ENCODE measurements at regions of chr3 and their contacts with region 1.

Region 1: DNA sequence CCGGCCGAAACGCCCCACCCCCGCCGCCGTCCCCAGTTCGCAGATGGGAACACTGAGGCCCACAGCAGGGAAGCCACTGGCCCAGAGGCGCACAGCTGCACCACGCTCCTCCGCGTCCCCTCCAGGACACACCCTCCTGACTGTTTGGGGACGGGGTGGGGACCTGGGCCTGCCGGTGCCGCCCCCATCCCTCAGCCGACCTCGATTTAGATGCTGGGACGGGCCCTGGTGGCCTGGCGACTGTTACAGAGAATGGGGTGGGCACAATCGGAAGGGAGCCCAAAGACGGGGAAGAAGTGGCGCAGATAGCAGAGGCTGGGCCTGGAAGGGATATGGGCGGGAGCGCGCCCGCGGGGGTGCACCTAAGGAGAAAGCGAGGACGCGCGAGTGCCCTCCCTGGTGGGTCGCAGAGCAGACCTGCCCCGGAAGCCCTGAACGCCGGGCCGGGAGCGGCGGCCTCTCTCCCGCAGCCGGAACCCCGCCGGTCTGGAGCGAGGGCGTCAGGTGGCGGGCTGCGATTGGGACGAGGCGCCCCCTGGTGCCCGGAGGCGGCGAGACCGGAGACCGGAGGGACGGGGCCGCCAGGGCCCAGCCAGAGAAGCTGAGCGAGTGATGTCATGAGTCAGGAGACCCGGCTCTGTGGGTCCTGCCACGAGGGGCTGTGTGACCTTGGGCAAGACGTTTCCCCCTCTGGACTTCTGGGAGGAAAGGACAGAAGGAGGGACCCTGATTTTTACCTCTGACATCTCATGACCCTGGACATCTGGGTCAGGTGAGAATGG is 78.4 kb downstream of the IQSEC1 start:
- DNase-seq: peak; percentile 88 to 91
- ATAC-seq: peak; percentile 82 to 87 (median 85)
- H3K4me3 ChIP-seq: peak overlapping the region; percentile 82
- H3K4me3 Mint-ChIP-seq: peak overlapping the region; percentile 98
- H3K27ac ChIP-seq: peak overlapping the region; percentile 93
- H3K27ac Mint-ChIP-seq: peak overlapping the region; percentile 90 to 96
- H3K4me1 ChIP-seq: peaks cover 70% of the 10 kb centered on the region
- H3K4me1 Mint-ChIP-seq: peaks cover 55 to 70% of the 10 kb centered on the region in 2 donors
- H3K27me3 ChIP-seq: no peaks in the 10 kb centered on the region
- H3K27me3 Mint-ChIP-seq: no peaks in the 10 kb centered on the region
- CTCF ChIP-seq: peak; percentile 93

Region 2: DNA sequence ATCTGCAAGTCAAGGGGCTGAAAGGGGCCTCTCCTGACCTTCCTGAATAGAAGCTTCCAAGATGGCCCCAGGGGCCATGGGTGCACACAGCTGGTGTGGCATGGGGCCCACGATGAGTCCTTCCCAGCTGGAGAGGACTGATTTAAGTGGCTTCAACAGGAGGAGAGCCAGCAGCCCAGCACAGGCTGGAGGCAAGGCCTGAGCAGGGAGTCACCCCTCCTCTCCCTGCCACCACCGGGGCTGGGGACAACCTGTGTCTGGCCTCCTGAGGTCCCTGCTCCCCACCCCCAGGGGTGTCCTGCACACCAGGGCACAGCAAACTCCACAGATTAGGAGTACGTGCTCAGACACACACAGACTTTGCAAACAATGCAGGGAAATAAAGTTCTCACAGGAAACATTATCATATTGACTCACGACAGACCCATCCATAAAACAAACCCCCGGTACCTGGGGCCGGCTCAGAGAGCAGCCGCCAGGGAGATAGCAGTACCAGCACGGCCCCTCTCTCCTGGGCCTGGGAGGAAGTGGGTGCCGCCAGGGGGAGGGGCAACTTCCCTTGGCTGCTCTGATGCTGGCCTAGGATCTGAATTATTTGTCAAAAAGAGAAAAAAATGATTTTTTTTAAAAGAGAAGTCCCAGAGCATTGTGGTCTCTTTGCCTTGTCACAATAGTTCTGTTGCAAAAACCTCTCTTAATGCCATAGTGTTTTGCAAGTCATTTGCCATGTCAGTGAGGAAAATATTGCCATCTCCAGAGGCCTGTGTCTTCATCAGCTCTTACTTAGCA is 532.4 kb before region 1 on chr3:
- intact Hi-C with region 1: no loop called
- DNase-seq: peak in 1 of 2 donors; percentile 38
- ATAC-seq: peak in 1 of 3 donors; percentile 24
- H3K4me3 ChIP-seq: no peak overlapping the region
- H3K4me3 Mint-ChIP-seq: no peak overlapping the region
- H3K27ac ChIP-seq: no peak overlapping the region
- H3K27ac Mint-ChIP-seq: no peak overlapping the region
- H3K4me1 ChIP-seq: peaks cover 6% of the 10 kb centered on the region
- H3K4me1 Mint-ChIP-seq: peaks cover 0 to 6% of the 10 kb centered on the region in 2 donors
- H3K27me3 ChIP-seq: no peaks in the 10 kb centered on the region
- H3K27me3 Mint-ChIP-seq: peaks cover 0 to 6% of the 10 kb centered on the region in 2 donors
- CTCF ChIP-seq: no peak

Region 3: DNA sequence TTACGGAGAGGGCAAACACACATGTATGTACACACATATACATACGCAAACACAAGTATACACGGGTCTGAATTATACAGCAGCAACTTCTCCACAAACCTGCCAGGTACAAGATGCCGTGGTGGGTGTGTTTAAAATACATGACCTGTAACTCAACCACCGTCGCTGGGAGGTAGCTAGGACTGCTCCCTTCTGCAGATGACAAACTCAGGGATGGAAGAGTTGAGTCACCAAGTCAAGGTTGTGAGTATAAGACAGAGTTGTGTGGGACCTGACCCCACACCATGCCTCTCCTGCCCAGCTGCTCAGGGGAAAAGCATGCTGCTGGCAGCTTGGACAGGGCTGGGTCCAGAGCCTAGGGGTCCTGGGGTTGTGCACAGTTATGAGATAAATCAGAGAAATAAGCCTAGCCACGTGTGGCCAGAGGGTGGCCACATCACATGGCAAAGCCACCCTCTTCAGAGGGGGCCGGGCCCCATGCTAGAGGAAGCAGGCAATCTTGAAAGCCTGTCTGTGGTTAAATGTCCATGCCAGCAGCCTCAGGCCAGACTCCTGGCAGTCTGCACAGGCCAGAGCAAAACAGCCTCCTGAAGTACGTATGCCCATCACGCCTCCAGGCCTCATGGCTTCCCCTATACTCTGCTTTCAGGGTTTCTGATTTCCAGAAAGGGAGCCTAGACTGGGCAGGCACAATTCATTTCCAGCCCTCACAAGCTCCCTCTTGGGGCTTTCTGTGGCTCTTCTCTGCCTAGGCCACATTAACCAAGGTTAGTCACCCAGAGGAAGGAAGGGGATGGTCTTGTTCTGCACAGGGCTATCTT is 45.7 kb before region 1 on chr3:
- intact Hi-C with region 1: loop called (anchors 10 kb)
- DNase-seq: peak in 1 of 2 donors; percentile 46
- ATAC-seq: peak; percentile 81 to 90 (median 82)
- H3K4me3 ChIP-seq: no peak overlapping the region
- H3K4me3 Mint-ChIP-seq: peak overlapping the region; percentile 77
- H3K27ac ChIP-seq: peak overlapping the region; percentile 1
- H3K27ac Mint-ChIP-seq: peak overlapping the region; percentile 48 to 81
- H3K4me1 ChIP-seq: peaks cover 82% of the 10 kb centered on the region
- H3K4me1 Mint-ChIP-seq: peaks cover 65 to 83% of the 10 kb centered on the region in 2 donors
- H3K27me3 ChIP-seq: no peaks in the 10 kb centered on the region
- H3K27me3 Mint-ChIP-seq: no peaks in the 10 kb centered on the region
- CTCF ChIP-seq: no peak

Region 4: GRCh38 chr3:13045904-13046568 is 51.2 kb after region 1 on chr3:
- intact Hi-C with region 1: loop called (anchors 10 kb)
- DNase-seq: peak in 1 of 2 donors; percentile 30
- ATAC-seq: peak; percentile 19 to 59 (median 56)
- H3K4me3 ChIP-seq: no peak overlapping the region
- H3K4me3 Mint-ChIP-seq: peak overlapping the region; percentile 42
- H3K27ac ChIP-seq: peak overlapping the region; percentile 72
- H3K27ac Mint-ChIP-seq: peak overlapping the region; percentile 8 to 67
- H3K4me1 ChIP-seq: peaks cover 46% of the 10 kb centered on the region
- H3K4me1 Mint-ChIP-seq: peaks cover 41 to 54% of the 10 kb centered on the region in 2 donors
- H3K27me3 ChIP-seq: no peaks in the 10 kb centered on the region
- H3K27me3 Mint-ChIP-seq: no peaks in the 10 kb centered on the region
- CTCF ChIP-seq: no peak

Measured in natural killer cell (primary cell).